ENCODE measurements at regions of chr7 and their contacts with region 1.

Region 1: GRCh38 chr7:105067691-105068090 is 53.7 kb downstream of the KMT2E start:
- DNase-seq: no peak
- ATAC-seq: no peak
- H3K4me3 ChIP-seq: no peak overlapping the region
- H3K4me3 Mint-ChIP-seq: no peak overlapping the region
- H3K27ac ChIP-seq: no peak overlapping the region
- H3K27ac Mint-ChIP-seq: peak overlapping the region; percentile 34
- H3K4me1 ChIP-seq: peaks cover 4% of the 10 kb centered on the region
- H3K4me1 Mint-ChIP-seq: peaks cover 53% of the 10 kb centered on the region
- H3K27me3 ChIP-seq: no peaks in the 10 kb centered on the region
- H3K27me3 Mint-ChIP-seq: no peaks in the 10 kb centered on the region
- CTCF ChIP-seq: no peak

Region 2: DNA sequence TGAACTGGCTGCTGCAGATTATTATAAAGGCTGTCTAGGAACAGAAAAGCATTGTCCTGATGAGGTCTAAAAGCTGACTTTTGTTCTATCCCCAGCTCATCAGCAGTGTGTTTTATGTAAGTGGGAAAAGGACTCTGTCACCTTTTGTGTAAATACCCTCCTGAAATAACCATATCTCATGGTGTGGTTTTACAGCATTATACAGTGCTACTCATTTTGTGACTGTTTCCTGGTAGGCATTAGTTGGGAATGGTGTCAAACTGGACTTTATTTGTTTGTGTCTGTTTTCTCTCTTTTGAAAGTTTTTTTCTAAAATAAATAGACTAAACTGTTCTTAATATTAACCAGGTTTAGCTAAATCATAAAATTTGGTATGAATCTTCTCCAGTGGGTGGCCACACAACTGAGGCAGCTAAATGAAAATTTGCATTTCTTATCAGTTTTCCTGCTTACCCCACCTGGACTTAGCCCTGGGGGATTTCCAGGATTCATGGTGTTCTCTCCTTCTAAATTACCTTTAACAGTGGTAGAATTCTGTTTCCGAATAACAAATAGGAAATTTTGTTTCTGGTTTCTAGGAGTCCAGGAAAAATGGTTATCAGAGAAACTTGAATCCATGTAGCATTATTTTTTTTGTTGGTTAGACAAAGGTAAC is 598.4 kb before region 1 on chr7:
- CTCF ChIA-PET with region 1: no interaction called
- POLR2A ChIA-PET with region 1: no interaction called
- intact Hi-C with region 1: no loop called
- DNase-seq: no peak
- ATAC-seq: no peak
- H3K4me3 ChIP-seq: no peak overlapping the region
- H3K4me3 Mint-ChIP-seq: no peak overlapping the region
- H3K27ac ChIP-seq: no peak overlapping the region
- H3K27ac Mint-ChIP-seq: no peak overlapping the region
- H3K4me1 ChIP-seq: no peaks in the 10 kb centered on the region
- H3K4me1 Mint-ChIP-seq: no peaks in the 10 kb centered on the region
- H3K27me3 ChIP-seq: no peaks in the 10 kb centered on the region
- H3K27me3 Mint-ChIP-seq: peaks cover 13% of the 10 kb centered on the region
- CTCF ChIP-seq: no peak

Region 3: GRCh38 chr7:105106473-105106872 is 38.8 kb after region 1 on chr7:
- CTCF ChIA-PET with region 1: no interaction called
- POLR2A ChIA-PET with region 1: no interaction called
- intact Hi-C with region 1: loop called in 1 of 2 experiments (anchors 2 kb)
- DNase-seq: no peak
- ATAC-seq: no peak
- H3K4me3 ChIP-seq: no peak overlapping the region
- H3K4me3 Mint-ChIP-seq: no peak overlapping the region
- H3K27ac ChIP-seq: no peak overlapping the region
- H3K27ac Mint-ChIP-seq: peak overlapping the region; percentile 55
- H3K4me1 ChIP-seq: peaks cover 3% of the 10 kb centered on the region
- H3K4me1 Mint-ChIP-seq: peaks cover 30% of the 10 kb centered on the region
- H3K27me3 ChIP-seq: no peaks in the 10 kb centered on the region
- H3K27me3 Mint-ChIP-seq: no peaks in the 10 kb centered on the region
- CTCF ChIP-seq: no peak

Region 4: DNA sequence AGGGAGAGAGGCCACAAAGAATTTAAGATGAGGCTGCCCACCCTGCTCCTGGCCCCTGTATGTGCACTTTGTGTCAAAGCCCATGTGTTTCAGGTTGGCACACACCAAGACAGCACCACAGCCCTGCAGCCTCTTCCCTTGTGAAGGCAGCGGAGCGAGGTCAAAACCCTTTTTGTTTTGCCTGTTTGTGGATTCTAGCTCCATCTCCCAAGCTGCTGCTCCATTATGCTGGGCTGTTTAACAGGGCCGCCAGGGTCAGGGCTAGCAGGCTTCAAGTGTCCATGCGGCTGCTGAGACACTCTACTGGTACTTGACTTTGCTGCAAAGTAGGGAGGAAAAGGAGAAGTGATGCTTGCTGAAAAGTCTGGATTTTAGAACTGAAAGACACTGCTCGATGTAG is 655.9 kb after region 1 on chr7:
- CTCF ChIA-PET with region 1: no interaction called
- POLR2A ChIA-PET with region 1: no interaction called
- intact Hi-C with region 1: no loop called
- DNase-seq: no peak
- ATAC-seq: no peak
- H3K4me3 ChIP-seq: no peak overlapping the region
- H3K4me3 Mint-ChIP-seq: no peak overlapping the region
- H3K27ac ChIP-seq: no peak overlapping the region
- H3K27ac Mint-ChIP-seq: no peak overlapping the region
- H3K4me1 ChIP-seq: no peaks in the 10 kb centered on the region
- H3K4me1 Mint-ChIP-seq: no peaks in the 10 kb centered on the region
- H3K27me3 ChIP-seq: no peaks in the 10 kb centered on the region
- H3K27me3 Mint-ChIP-seq: no peaks in the 10 kb centered on the region
- CTCF ChIP-seq: no peak

Measured in CD4-positive, alpha-beta T cell (primary cell).